ENCODE measurements at regions of chr6 and their contacts with region 1.

Region 1: GRCh38 chr6:79949233-79949632 is 1.9 kb upstream of the ELOVL4 start:
- DNase-seq: peak in 1 of 2 donors; percentile 71
- H3K4me3 ChIP-seq: no peak overlapping the region
- H3K27ac ChIP-seq: no peak overlapping the region
- H3K4me1 ChIP-seq: peaks cover 0 to 3% of the 10 kb centered on the region in 2 donors
- H3K27me3 ChIP-seq: no peaks in the 10 kb centered on the region
- CTCF ChIP-seq: peak; percentile 32 to 51 (median 43)

Region 2: GRCh38 chr6:79797912-79798311 is 151.3 kb before region 1 on chr6:
- intact Hi-C with region 1: no loop called
- DNase-seq: no peak
- H3K4me3 ChIP-seq: no peak overlapping the region
- H3K27ac ChIP-seq: no peak overlapping the region
- H3K4me1 ChIP-seq: no peaks in the 10 kb centered on the region
- H3K27me3 ChIP-seq: no peaks in the 10 kb centered on the region
- CTCF ChIP-seq: no peak

Region 3: GRCh38 chr6:79869600-79870084 is 79.6 kb before region 1 on chr6:
- intact Hi-C with region 1: loop called (anchors 2 kb)
- DNase-seq: peak; percentile 9 to 86
- H3K4me3 ChIP-seq: peak overlapping the region; percentile 28 to 55
- H3K27ac ChIP-seq: no peak overlapping the region
- H3K4me1 ChIP-seq: no peaks in the 10 kb centered on the region
- H3K27me3 ChIP-seq: no peaks in the 10 kb centered on the region
- CTCF ChIP-seq: peak; percentile 64 to 93 (median 90)

Region 4: DNA sequence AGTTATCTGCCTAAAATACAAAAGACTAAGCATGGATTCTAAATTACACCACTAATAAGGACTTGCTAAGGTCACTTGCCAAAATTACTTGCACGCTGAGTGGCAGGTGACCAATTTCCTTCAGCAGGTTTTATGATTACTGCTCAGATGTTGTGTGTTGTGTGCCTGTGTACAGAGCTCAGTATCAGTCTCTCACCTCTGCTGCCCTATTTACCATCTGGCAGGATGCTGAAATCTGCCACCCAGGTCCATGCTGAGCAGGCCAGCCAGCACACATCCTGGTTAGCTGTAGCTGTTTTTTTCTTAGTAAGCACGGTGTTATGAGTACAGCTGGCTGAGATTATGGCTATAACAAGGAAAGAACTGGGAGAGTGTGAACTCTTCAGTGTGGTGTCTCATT is 35.9 kb before region 1 on chr6:
- intact Hi-C with region 1: no loop called
- DNase-seq: no peak
- H3K4me3 ChIP-seq: no peak overlapping the region
- H3K27ac ChIP-seq: no peak overlapping the region
- H3K4me1 ChIP-seq: no peaks in the 10 kb centered on the region
- H3K27me3 ChIP-seq: no peaks in the 10 kb centered on the region
- CTCF ChIP-seq: no peak

Region 5: GRCh38 chr6:80004173-80005072 is 55.2 kb after region 1 on chr6 and contains the start of gene TTK:
- intact Hi-C with region 1: loop called (anchors 1 kb)
- DNase-seq: peak; percentile 74 to 95
- H3K4me3 ChIP-seq: peak within 1 kb of the TSS; percentile 73 to 81
- H3K27ac ChIP-seq: peak within 1 kb of the TSS; percentile 75 to 91
- H3K4me1 ChIP-seq: peaks cover 0 to 9% of the 10 kb centered on the region in 2 donors
- H3K27me3 ChIP-seq: no peaks in the 10 kb centered on the region
- CTCF ChIP-seq: no peak
- total RNA-seq, gene TTK: not detected

Region 6: DNA sequence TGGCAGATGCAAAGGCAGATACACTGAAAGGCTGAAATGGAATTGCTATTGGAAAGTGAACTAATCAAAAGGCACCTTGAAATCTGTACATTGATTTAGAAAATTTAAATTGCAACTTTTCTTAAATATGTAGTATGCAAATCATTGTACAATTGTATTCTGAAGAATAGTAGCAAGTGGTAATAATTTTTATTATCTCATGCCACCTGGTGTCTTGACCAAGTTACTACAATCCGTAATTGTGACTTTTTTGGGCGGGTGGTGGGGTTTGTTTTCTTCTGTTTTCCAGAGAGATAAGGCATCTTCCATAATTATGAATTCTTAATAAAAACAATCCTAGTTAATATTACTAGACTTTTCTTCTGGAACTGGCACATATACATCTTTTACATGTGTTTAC is 144.8 kb after region 1 on chr6:
- intact Hi-C with region 1: loop called (anchors 5 kb)
- DNase-seq: no peak
- H3K4me3 ChIP-seq: no peak overlapping the region
- H3K27ac ChIP-seq: no peak overlapping the region
- H3K4me1 ChIP-seq: no peaks in the 10 kb centered on the region
- H3K27me3 ChIP-seq: no peaks in the 10 kb centered on the region
- CTCF ChIP-seq: peak in 2 of 3 experiments; percentile 46 to 52

Measured in ascending aorta (tissue), 2 donors.